ENCODE measurements at regions of chr15 and their contacts with region 1.

Region 1: GRCh38 chr15:49876401-49877038 is 242.5 kb downstream of the ATP8B4 start:
- DNase-seq: no peak
- ATAC-seq: peak; percentile 81

Region 2: GRCh38 chr15:49815950-49816349 is 60.6 kb before region 1 on chr15:
- intact Hi-C with region 1: no loop called
- DNase-seq: no peak
- ATAC-seq: peak; percentile 39

Region 3: GRCh38 chr15:50051803-50052419 is 175.4 kb after region 1 on chr15:
- intact Hi-C with region 1: loop called (anchors 10 kb)
- DNase-seq: no peak
- ATAC-seq: peak; percentile 45